ENCODE measurements at regions of chr21 and their contacts with region 1.

Region 1: GRCh38 chr21:31088315-31088714 is 50.0 kb upstream of the KRTAP19-8 start:
- DNase-seq: peak in 1 of 4 donors; percentile 75
- ATAC-seq: no peak
- H3K4me3 ChIP-seq: no peak overlapping the region
- H3K27ac ChIP-seq: no peak overlapping the region
- H3K4me1 ChIP-seq: no peaks in the 10 kb centered on the region
- H3K27me3 ChIP-seq: no peaks in the 10 kb centered on the region
- CTCF ChIP-seq: no peak

Region 2: DNA sequence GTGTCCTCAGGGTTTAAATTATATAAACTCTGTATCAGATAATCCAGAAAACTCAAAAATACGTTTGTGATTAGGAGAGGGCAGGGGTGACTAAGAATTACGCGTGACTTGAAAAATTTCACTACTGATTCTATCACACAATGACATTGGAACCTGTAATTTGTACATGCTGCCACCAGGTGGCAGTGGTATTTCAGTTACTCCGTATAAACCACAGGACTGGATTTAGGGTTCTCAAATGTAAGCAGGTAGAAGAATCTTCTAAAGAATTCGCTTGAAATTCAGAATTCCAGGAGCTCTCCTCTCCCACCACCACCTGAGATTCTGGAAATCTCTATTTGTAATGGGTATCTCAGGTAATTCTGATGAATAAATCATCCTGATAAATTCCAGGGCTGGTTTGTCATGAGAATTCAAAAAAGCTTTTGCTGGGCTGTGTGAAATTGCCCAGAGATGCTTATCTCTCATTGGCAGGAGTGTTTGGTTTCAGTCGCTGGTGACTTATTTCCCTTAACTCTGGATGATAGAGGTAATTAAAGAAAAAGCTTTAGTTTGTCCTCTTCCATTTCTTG is 257.0 kb before region 1 on chr21:
- intact Hi-C with region 1: loop called in 1 of 2 experiments (anchors 10 kb)
- DNase-seq: peak in 1 of 4 donors; percentile 4
- ATAC-seq: no peak
- H3K4me3 ChIP-seq: no peak overlapping the region
- H3K27ac ChIP-seq: no peak overlapping the region
- H3K4me1 ChIP-seq: no peaks in the 10 kb centered on the region
- H3K27me3 ChIP-seq: no peaks in the 10 kb centered on the region
- CTCF ChIP-seq: peak; percentile 32 to 42

Region 3: GRCh38 chr21:31052489-31053142 is 35.7 kb before region 1 on chr21:
- intact Hi-C with region 1: no loop called
- DNase-seq: no peak
- ATAC-seq: no peak
- H3K4me3 ChIP-seq: no peak overlapping the region
- H3K27ac ChIP-seq: no peak overlapping the region
- H3K4me1 ChIP-seq: no peaks in the 10 kb centered on the region
- H3K27me3 ChIP-seq: no peaks in the 10 kb centered on the region
- CTCF ChIP-seq: no peak

Measured in left lung (tissue), 14 donors.